Calu3 (cell line): ENCODE measurements at regions of chr16 and their contacts with region 1.

Region 1: GRCh38 chr16:69726296-69727060 is at the start of gene NQO1:
- DNase-seq: peak; percentile 99
- H3K4me3 Mint-ChIP-seq: peak within 1 kb of the TSS; percentile 81
- H3K27ac Mint-ChIP-seq: peak within 1 kb of the TSS; percentile 99
- H3K4me1 Mint-ChIP-seq: peaks cover 38% of the 10 kb centered on the region
- H3K27me3 Mint-ChIP-seq: no peaks in the 10 kb centered on the region
- CTCF ChIP-seq: no peak
- total RNA-seq, gene NQO1: 365 and 415 TPM in 2 replicates

Region 2: GRCh38 chr16:69286941-69287713 is 439.4 kb before region 1 on chr16:
- CTCF ChIA-PET with region 1: no interaction called
- intact Hi-C with region 1: no loop called
- DNase-seq: peak; percentile 56
- H3K4me3 Mint-ChIP-seq: no peak overlapping the region
- H3K27ac Mint-ChIP-seq: no peak overlapping the region
- H3K4me1 Mint-ChIP-seq: no peaks in the 10 kb centered on the region
- H3K27me3 Mint-ChIP-seq: no peaks in the 10 kb centered on the region
- CTCF ChIP-seq: peak; percentile 76

Region 3: GRCh38 chr16:69709456-69710084 is 16.9 kb before region 1 on chr16:
- CTCF ChIA-PET with region 1: interaction called, 11 read pairs
- intact Hi-C with region 1: loop called (anchors 2 kb)
- DNase-seq: no peak
- H3K4me3 Mint-ChIP-seq: no peak overlapping the region
- H3K27ac Mint-ChIP-seq: peak overlapping the region; percentile 37
- H3K4me1 Mint-ChIP-seq: peaks cover 33% of the 10 kb centered on the region
- H3K27me3 Mint-ChIP-seq: no peaks in the 10 kb centered on the region
- CTCF ChIP-seq: peak; percentile 48

Region 4: DNA sequence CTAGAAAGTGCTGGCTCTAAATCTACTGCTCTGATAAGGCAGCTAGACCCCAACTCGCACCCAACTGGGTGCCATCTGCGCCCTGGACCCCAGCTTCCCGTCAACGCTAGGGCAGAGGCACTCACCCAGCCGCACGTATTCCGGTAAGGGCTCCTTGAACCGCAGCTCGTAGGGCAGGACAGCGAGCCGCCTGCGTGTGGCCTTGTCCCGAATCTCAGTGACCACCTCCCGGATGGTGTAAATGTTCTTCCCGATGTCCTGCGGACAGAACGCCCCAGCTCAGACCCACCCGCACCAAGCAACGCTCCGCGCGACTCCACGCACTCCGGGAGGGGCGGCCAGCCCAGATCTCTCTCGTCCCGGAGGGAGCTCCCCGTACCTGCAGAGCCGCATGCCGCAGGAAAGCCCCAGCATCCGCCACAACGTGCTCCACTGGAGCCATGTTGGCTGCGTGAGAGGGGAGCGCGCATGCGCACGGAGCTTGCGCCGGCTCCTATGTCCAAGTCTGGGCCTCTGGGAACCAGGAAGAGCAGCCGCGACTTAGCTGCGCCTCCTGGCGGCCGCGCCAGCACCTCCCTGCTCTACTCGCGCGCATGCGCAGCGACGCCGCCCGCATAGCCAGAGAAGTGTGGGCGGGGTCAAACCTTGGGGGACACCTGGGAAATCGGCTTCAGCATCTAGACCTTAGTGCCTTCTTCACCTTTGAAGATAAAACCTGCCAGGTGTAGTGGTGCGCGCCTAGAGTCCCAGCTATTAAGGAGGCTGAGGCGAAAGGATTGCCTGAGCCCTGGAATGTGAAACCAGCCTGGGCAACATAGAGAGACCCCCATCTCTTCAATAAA is 28.2 kb after region 1 on chr16 and contains the start of gene NOB1:
- CTCF ChIA-PET with region 1: interaction called, 12 read pairs
- intact Hi-C with region 1: loop called (anchors 1 kb)
- DNase-seq: peak; percentile 98
- H3K4me3 Mint-ChIP-seq: peak within 1 kb of the TSS; percentile 98
- H3K27ac Mint-ChIP-seq: peak within 1 kb of the TSS; percentile 93
- H3K4me1 Mint-ChIP-seq: peaks cover 16% of the 10 kb centered on the region
- H3K27me3 Mint-ChIP-seq: peaks cover 13% of the 10 kb centered on the region
- CTCF ChIP-seq: peak; percentile 97
- total RNA-seq, gene NOB1: 82.4 and 88.2 TPM in 2 replicates

Region 5: GRCh38 chr16:69773260-69773947 is 46.9 kb after region 1 on chr16:
- CTCF ChIA-PET with region 1: no interaction called
- intact Hi-C with region 1: no loop called
- DNase-seq: no peak
- H3K4me3 Mint-ChIP-seq: no peak overlapping the region
- H3K27ac Mint-ChIP-seq: no peak overlapping the region
- H3K4me1 Mint-ChIP-seq: peaks cover 11% of the 10 kb centered on the region
- H3K27me3 Mint-ChIP-seq: no peaks in the 10 kb centered on the region
- CTCF ChIP-seq: no peak

Region 6: GRCh38 chr16:69823831-69824563 is 97.5 kb after region 1 on chr16:
- CTCF ChIA-PET with region 1: no interaction called
- intact Hi-C with region 1: no loop called
- DNase-seq: no peak
- H3K4me3 Mint-ChIP-seq: no peak overlapping the region
- H3K27ac Mint-ChIP-seq: no peak overlapping the region
- H3K4me1 Mint-ChIP-seq: no peaks in the 10 kb centered on the region
- H3K27me3 Mint-ChIP-seq: no peaks in the 10 kb centered on the region
- CTCF ChIP-seq: no peak

Region 7: DNA sequence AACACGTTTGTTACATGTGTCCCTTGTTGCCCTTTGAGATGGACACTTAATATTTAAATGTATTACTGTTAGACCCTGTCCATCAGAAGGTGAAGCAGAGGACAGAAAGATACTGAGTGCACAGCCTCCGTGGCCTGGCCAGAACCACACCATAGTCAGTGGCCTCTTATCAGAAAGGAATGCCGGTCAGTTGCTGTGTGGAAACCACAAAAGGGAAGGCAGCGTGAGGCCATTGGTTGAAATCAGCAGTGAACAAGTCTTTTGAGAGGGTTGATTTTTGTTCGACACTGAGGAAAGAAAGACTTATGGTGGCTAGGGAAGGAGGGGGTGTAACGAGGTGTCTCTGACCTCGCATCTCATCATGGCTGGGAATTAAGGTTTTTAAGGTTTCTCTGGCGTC is 139.2 kb after region 1 on chr16:
- CTCF ChIA-PET with region 1: no interaction called
- intact Hi-C with region 1: no loop called
- DNase-seq: peak; percentile 35
- H3K4me3 Mint-ChIP-seq: no peak overlapping the region
- H3K27ac Mint-ChIP-seq: peak overlapping the region; percentile 15
- H3K4me1 Mint-ChIP-seq: peaks cover 15% of the 10 kb centered on the region
- H3K27me3 Mint-ChIP-seq: no peaks in the 10 kb centered on the region
- CTCF ChIP-seq: no peak